HepG2 (cell line): ENCODE measurements at regions of chr22 and their contacts with region 1.

Region 1: GRCh38 chr22:25447686-25448434 is 116.6 kb upstream of the GRK3 start:
- DNase-seq: peak; percentile 83
- ATAC-seq: peak; percentile 94
- H3K4me3 ChIP-seq: peak overlapping the region; percentile 64 to 96 (median 91)
- H3K27ac ChIP-seq: peak overlapping the region; percentile 95
- H3K4me1 ChIP-seq: peaks cover 53% of the 10 kb centered on the region
- H3K27me3 ChIP-seq: no peaks in the 10 kb centered on the region; a peak in 1 of 5 replicates
- CTCF ChIP-seq: peak; percentile 98
- EP300 ChIP-seq: no peak
- POLR2A ChIP-seq: peak; percentile 78
- RAD21 ChIP-seq: 0 out of 2 replicates have a peak, but pooled peaks have one; percentile 25

Region 2: DNA sequence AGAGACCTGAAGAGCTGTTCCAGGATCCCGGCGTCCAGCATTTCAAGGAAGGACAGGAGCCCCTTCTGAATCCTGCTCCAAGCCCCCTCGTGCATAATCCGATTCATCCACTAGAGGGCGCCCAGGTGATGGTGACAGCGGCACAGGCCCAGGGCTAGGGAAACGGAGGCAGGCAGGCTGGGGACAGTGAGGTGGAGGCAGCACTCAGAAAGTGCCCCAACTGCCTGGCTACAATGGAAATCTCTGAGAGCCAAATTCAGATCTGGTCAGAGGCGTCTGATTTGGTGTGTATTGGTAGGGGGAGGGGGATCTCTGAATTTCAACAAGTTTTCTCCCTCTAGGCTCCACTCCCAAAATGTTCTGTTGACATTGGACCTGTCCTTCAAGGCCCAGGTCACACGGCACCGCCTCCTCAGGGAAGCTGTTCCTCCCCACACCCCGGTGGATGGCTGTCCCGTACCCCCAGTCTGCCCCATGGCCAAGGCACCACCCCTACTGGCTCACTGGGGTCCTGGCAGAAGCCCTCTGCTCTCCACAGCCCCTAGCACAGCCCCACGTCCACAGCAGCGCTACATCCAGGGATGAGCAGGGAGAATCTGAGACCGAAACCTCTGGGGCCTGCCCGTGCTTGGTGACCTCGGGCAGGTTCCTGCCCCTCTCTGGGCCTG is 85.5 kb before region 1 on chr22:
- CTCF ChIA-PET with region 1: interaction called, 8 read pairs
- POLR2A ChIA-PET with region 1: no interaction called
- in situ Hi-C with region 1: no loop called
- intact Hi-C with region 1: loop called (anchors 5 kb)
- DNase-seq: peak; percentile 35
- ATAC-seq: peak; percentile 72
- H3K4me3 ChIP-seq: no peak overlapping the region
- H3K27ac ChIP-seq: no peak overlapping the region
- H3K4me1 ChIP-seq: no peaks in the 10 kb centered on the region
- H3K27me3 ChIP-seq: no peaks in the 10 kb centered on the region
- CTCF ChIP-seq: peak; percentile 92
- EP300 ChIP-seq: no peak
- POLR2A ChIP-seq: no peak
- RAD21 ChIP-seq: peak; percentile 89